B cell (primary cell): ENCODE measurements at regions of chr11 and their contacts with region 1.

Region 1: DNA sequence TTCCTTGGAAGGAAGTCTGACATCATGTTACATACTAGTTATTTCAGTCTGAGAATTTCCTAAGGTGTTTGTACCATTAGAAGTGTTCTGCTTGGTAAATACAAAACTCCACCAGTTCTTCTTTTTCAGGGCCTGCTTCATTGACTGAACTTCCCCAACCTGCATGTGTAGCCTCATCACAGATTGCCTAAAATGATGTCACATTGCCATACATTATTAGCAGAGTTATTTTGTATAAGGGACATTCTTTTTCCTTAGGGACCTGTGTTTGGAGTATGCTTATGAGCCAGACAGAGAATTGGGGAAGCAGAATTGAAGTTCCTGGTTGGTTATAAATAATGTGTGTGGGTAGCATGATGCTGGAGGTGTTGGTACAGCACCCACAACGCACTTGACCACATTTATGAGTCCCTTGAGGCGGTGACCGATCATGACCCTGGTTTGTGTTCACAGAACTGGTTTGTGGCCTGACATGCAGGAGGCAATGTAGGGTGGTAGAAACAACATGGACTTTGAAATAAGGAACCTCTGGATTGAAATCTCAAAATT is 16.4 kb upstream of the MMP7 start:
- DNase-seq: peak; percentile 92
- ATAC-seq: peak; percentile 76
- H3K4me3 ChIP-seq: no peak overlapping the region
- H3K4me3 Mint-ChIP-seq: peak overlapping the region; percentile 31
- H3K27ac ChIP-seq: peak overlapping the region; percentile 86 to 98
- H3K27ac Mint-ChIP-seq: peak overlapping the region; percentile 91
- H3K4me1 ChIP-seq: peaks cover 43 to 46% of the 10 kb centered on the region in 2 donors
- H3K4me1 Mint-ChIP-seq: peaks cover 60% of the 10 kb centered on the region
- H3K27me3 ChIP-seq: no peaks in the 10 kb centered on the region
- H3K27me3 Mint-ChIP-seq: no peaks in the 10 kb centered on the region
- CTCF ChIP-seq: no peak

Region 2: GRCh38 chr11:102225689-102226568 is 321.1 kb before region 1 on chr11:
- CTCF ChIA-PET with region 1: no interaction called
- POLR2A ChIA-PET with region 1: no interaction called
- intact Hi-C with region 1: no loop called
- DNase-seq: no peak
- ATAC-seq: no peak
- H3K4me3 ChIP-seq: no peak overlapping the region
- H3K4me3 Mint-ChIP-seq: no peak overlapping the region
- H3K27ac ChIP-seq: no peak overlapping the region
- H3K27ac Mint-ChIP-seq: no peak overlapping the region
- H3K4me1 ChIP-seq: no peaks in the 10 kb centered on the region
- H3K4me1 Mint-ChIP-seq: no peaks in the 10 kb centered on the region
- H3K27me3 ChIP-seq: no peaks in the 10 kb centered on the region
- H3K27me3 Mint-ChIP-seq: peaks cover 19% of the 10 kb centered on the region
- CTCF ChIP-seq: no peak

Region 3: DNA sequence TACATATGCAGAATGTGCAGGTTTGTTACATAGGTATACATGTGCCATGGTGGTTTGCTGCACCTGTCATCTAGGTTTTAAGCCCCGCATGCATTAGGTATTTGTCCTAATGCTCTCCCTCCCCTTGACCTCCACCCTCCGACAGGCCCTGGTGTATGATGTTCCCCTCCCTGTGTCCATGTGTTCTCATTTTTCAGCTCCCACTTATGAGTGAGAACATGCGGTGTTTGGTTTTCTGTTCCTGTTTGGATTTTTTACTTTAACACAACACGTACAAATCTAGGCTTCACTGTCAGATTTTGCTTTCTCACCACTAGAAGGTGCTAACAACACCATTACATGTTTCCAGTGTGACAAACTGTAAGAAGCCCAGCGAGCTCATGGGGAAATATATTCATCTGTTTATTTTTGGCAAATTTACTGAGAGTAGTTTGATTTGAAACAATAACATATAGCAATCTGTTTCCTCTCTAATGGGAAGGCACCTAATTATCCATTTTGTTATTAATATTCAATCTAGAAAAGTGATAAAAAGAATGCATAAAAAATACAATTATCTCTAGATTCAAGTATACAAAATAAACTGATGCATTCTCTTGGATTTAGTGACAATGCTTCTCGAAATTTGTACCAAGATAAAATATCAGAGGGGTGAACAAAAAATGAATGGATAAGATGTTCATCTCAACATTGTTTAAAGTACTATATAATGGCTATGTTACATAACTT is 253.0 kb before region 1 on chr11:
- CTCF ChIA-PET with region 1: no interaction called
- POLR2A ChIA-PET with region 1: no interaction called
- intact Hi-C with region 1: loop called (anchors 5 kb)
- DNase-seq: peak; percentile 84
- ATAC-seq: peak; percentile 88
- H3K4me3 ChIP-seq: peak overlapping the region in 4 of 5 experiments; percentile 9 to 48 (median 29)
- H3K4me3 Mint-ChIP-seq: peak overlapping the region; percentile 98
- H3K27ac ChIP-seq: peak overlapping the region; percentile 45 to 73
- H3K27ac Mint-ChIP-seq: peak overlapping the region; percentile 99
- H3K4me1 ChIP-seq: peaks cover 33 to 41% of the 10 kb centered on the region in 2 donors
- H3K4me1 Mint-ChIP-seq: peaks cover 77% of the 10 kb centered on the region
- H3K27me3 ChIP-seq: no peaks in the 10 kb centered on the region
- H3K27me3 Mint-ChIP-seq: no peaks in the 10 kb centered on the region
- CTCF ChIP-seq: peak; percentile 83

Region 4: GRCh38 chr11:102346748-102347461 is 200.1 kb before region 1 on chr11 and contains the start of gene BIRC2:
- CTCF ChIA-PET with region 1: no interaction called
- POLR2A ChIA-PET with region 1: no interaction called
- intact Hi-C with region 1: loop called (anchors 2 kb)
- DNase-seq: peak; percentile 98
- ATAC-seq: peak; percentile 88
- H3K4me3 ChIP-seq: peak within 1 kb of the TSS; percentile 63 to 98 (median 92)
- H3K4me3 Mint-ChIP-seq: peak within 1 kb of the TSS; percentile 90
- H3K27ac ChIP-seq: peak within 1 kb of the TSS; percentile 94 to 97
- H3K27ac Mint-ChIP-seq: peak within 1 kb of the TSS; percentile 98
- H3K4me1 ChIP-seq: peaks cover 14 to 21% of the 10 kb centered on the region in 2 donors
- H3K4me1 Mint-ChIP-seq: peaks cover 36% of the 10 kb centered on the region
- H3K27me3 ChIP-seq: no peaks in the 10 kb centered on the region
- H3K27me3 Mint-ChIP-seq: no peaks in the 10 kb centered on the region
- CTCF ChIP-seq: peak; percentile 73
- total RNA-seq, gene BIRC2: 46.7 and 51.0 TPM in 2 replicates

Region 5: DNA sequence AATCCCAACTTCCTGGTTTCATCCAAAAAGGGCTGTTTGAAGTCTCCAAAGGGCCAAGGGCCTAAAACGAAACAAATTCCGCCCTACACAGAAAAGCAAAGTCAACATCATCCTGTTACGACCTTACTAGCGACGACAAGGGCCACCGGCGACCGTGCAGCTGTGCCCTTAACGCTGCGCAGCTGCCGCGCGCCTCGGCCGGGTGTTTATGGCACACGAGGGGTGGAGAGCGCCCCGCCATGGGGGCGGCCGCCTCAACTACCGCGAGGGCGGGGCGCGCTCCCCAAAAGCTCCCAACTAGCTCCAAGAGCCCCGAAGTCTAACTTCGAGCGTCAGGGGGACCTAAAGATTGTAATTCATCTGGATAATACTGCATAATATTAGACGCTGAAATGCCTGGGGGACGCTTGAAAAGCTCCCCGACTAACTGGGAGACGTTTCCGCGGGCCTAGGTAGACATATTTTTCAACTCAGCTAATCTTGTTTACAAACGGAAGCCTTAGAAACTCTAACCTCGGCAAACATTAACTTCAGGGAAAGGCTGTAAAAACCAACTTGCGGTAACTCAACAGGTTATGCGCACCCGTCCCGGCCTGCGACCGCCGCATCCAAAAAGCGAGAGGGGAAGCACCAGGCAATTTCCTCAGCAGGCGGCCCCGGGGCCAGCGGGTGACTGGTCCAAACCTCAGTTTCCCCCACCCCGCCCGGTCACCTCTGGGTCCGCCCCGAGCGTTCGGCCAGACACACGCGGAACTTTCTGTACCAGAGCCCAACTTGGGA is 95.1 kb before region 1 on chr11:
- CTCF ChIA-PET with region 1: no interaction called
- POLR2A ChIA-PET with region 1: no interaction called
- intact Hi-C with region 1: loop called (anchors 2 kb)
- DNase-seq: peak; percentile 88
- ATAC-seq: peak; percentile 58
- H3K4me3 ChIP-seq: peak overlapping the region; percentile 83 to 98 (median 91)
- H3K4me3 Mint-ChIP-seq: peak overlapping the region; percentile 98
- H3K27ac ChIP-seq: peak overlapping the region; percentile 82 to 87
- H3K27ac Mint-ChIP-seq: peak overlapping the region; percentile 98
- H3K4me1 ChIP-seq: peaks cover 56 to 59% of the 10 kb centered on the region in 2 donors
- H3K4me1 Mint-ChIP-seq: peaks cover 73% of the 10 kb centered on the region
- H3K27me3 ChIP-seq: no peaks in the 10 kb centered on the region
- H3K27me3 Mint-ChIP-seq: no peaks in the 10 kb centered on the region
- CTCF ChIP-seq: no peak

Region 6: GRCh38 chr11:102476812-102477211 is 70.2 kb before region 1 on chr11:
- CTCF ChIA-PET with region 1: no interaction called
- POLR2A ChIA-PET with region 1: no interaction called
- intact Hi-C with region 1: loop called (anchors 2 kb)
- DNase-seq: no peak
- ATAC-seq: no peak
- H3K4me3 ChIP-seq: no peak overlapping the region
- H3K4me3 Mint-ChIP-seq: peak overlapping the region; percentile 69
- H3K27ac ChIP-seq: no peak overlapping the region
- H3K27ac Mint-ChIP-seq: peak overlapping the region; percentile 76
- H3K4me1 ChIP-seq: peaks cover 28% of the 10 kb centered on the region in 2 donors
- H3K4me1 Mint-ChIP-seq: peaks cover 42% of the 10 kb centered on the region
- H3K27me3 ChIP-seq: peaks cover 0 to 3% (median 0%) of the 10 kb centered on the region in 4 experiments
- H3K27me3 Mint-ChIP-seq: peaks cover 7% of the 10 kb centered on the region
- CTCF ChIP-seq: no peak

Region 7: GRCh38 chr11:102510439-102511135 is 36.4 kb before region 1 on chr11:
- CTCF ChIA-PET with region 1: no interaction called
- POLR2A ChIA-PET with region 1: no interaction called
- intact Hi-C with region 1: no loop called
- DNase-seq: no peak
- ATAC-seq: no peak
- H3K4me3 ChIP-seq: no peak overlapping the region
- H3K4me3 Mint-ChIP-seq: no peak overlapping the region
- H3K27ac ChIP-seq: no peak overlapping the region
- H3K27ac Mint-ChIP-seq: no peak overlapping the region
- H3K4me1 ChIP-seq: no peaks in the 10 kb centered on the region
- H3K4me1 Mint-ChIP-seq: no peaks in the 10 kb centered on the region
- H3K27me3 ChIP-seq: no peaks in the 10 kb centered on the region
- H3K27me3 Mint-ChIP-seq: no peaks in the 10 kb centered on the region
- CTCF ChIP-seq: no peak

Region 8: GRCh38 chr11:102560555-102561011 is 13.6 kb after region 1 on chr11:
- CTCF ChIA-PET with region 1: interaction called, 3 read pairs
- POLR2A ChIA-PET with region 1: interaction called, 3 read pairs
- intact Hi-C with region 1: loop called (anchors 1 kb)
- DNase-seq: peak; percentile 70
- ATAC-seq: peak; percentile 53
- H3K4me3 ChIP-seq: peak overlapping the region in 4 of 5 experiments; percentile 30 to 67 (median 40)
- H3K4me3 Mint-ChIP-seq: peak overlapping the region; percentile 88
- H3K27ac ChIP-seq: peak overlapping the region; percentile 87 to 96
- H3K27ac Mint-ChIP-seq: peak overlapping the region; percentile 89
- H3K4me1 ChIP-seq: peaks cover 53 to 56% of the 10 kb centered on the region in 2 donors
- H3K4me1 Mint-ChIP-seq: peaks cover 54% of the 10 kb centered on the region
- H3K27me3 ChIP-seq: no peaks in the 10 kb centered on the region
- H3K27me3 Mint-ChIP-seq: no peaks in the 10 kb centered on the region
- CTCF ChIP-seq: no peak